ENCODE measurements at regions of chrX and their contacts with region 1.

Region 1: DNA sequence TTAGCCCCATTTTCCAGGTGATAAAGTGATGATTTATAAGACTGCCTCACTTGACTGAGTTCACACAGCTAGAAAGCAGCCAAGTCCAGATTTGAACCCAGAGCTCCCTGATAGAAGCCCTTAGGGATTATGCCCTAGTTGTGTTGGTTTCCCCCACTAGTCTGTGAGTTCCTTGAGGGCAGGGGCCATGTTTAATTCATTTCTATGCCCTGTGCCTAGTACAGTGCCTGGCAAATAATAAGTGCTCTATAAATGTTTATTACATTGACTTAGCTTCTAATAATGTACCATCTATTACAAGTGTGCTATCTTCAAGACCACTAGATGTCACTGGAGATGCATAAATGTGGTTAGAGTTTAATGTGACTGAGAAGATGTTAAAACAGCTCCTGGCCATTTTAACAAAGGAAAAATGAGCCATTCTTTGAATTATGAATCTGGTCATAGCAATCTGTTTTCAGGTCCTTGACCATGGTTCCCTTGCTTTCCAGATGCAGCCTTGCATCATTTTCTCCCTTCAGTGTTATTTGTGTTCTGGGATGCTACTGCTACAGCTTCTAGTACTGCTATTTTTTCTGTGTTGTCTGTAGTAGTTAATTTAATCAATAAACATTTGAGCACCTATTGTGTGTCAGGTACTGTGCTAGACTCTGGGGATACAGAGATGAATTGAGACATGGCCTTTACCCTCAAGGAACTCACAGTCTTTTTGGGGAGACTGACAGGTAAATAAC is 43.2 kb downstream of the SLC9A6 start:
- DNase-seq: no peak
- H3K4me3 ChIP-seq: no peak overlapping the region
- H3K27me3 ChIP-seq: no peaks in the 10 kb centered on the region
- CTCF ChIP-seq: peak; percentile 48

Region 2: DNA sequence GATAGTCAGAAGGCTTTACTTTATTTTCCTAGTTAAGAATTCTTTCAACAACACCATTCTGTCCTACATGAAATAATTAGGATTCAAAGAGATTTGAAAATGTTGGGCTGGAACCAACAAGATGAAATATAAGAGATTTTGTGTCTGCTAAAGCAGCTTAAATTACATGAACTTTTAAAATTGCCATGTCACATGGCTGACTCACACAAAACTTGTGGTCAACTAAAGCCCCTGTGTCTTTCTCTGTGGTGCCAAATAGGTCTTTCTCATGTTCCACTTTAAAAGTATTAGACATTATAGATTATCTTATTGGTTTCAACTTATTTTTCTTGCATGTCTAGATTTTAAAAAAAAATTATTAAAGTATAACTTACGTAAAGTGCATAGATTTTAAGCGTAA is 58.1 kb after region 1 on chrX:
- CTCF ChIA-PET with region 1: no interaction called
- POLR2A ChIA-PET with region 1: no interaction called
- DNase-seq: no peak
- H3K4me3 ChIP-seq: no peak overlapping the region
- H3K27me3 ChIP-seq: no peaks in the 10 kb centered on the region
- CTCF ChIP-seq: no peak

Region 3: DNA sequence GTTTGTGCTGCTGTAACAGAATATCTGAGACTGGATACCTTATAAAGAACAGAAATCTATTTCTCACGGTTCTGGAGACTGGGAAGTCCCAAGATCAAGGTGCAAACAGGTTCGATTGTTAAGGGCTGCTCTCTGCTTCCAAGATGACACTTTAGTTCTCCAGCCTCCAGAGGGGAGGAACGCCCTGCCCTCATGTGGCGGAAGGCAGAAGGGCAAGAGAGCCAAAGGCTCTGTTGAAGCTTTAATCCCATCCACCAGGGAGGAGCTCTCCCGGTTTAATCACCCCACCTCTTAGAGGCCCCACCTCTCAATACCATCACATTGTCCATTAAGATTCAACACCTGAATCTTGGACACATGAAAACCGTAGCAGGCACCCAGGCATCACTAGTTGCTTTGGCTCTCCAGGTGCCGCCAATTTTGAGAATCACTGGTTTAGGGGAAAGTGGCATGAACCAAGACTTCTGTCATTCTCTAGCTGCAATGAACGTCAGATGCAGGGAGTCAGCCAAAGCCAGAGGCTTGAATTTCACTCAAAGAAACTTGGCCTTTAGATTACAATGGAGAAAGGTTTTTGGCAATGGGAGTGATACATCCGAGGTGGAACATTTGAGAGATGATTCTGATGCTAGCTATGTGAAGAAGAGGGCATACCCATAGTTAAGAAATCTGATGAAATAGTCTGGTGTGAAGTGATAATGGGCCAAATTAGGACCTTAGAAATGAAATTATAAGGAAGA is 134.6 kb after region 1 on chrX:
- CTCF ChIA-PET with region 1: interaction called, 114 read pairs
- POLR2A ChIA-PET with region 1: interaction called, 4 read pairs
- DNase-seq: no peak
- H3K4me3 ChIP-seq: no peak overlapping the region
- H3K27me3 ChIP-seq: no peaks in the 10 kb centered on the region
- CTCF ChIP-seq: peak; percentile 78

Region 4: GRCh38 chrX:136209016-136209738 is 180.8 kb after region 1 on chrX:
- CTCF ChIA-PET with region 1: interaction called, 16 read pairs
- POLR2A ChIA-PET with region 1: no interaction called
- DNase-seq: no peak
- H3K4me3 ChIP-seq: no peak overlapping the region
- H3K27me3 ChIP-seq: no peaks in the 10 kb centered on the region
- CTCF ChIP-seq: peak; percentile 51

Region 5: GRCh38 chrX:136975684-136976470 is 947.5 kb after region 1 on chrX:
- CTCF ChIA-PET with region 1: no interaction called
- POLR2A ChIA-PET with region 1: no interaction called
- DNase-seq: no peak
- H3K4me3 ChIP-seq: no peak overlapping the region
- H3K27me3 ChIP-seq: no peaks in the 10 kb centered on the region
- CTCF ChIP-seq: no peak